ENCODE measurements at regions of chr12 and their contacts with region 1.

Region 1: GRCh38 chr12:93689076-93689834 is 12.1 kb downstream of the CRADD start:
- DNase-seq: no peak
- ATAC-seq: no peak
- H3K4me3 ChIP-seq: no peak overlapping the region
- H3K27ac ChIP-seq: no peak overlapping the region
- H3K4me1 ChIP-seq: no peaks in the 10 kb centered on the region
- H3K27me3 ChIP-seq: no peaks in the 10 kb centered on the region
- CTCF ChIP-seq: no peak

Region 2: GRCh38 chr12:93127582-93128331 is 561.5 kb before region 1 on chr12:
- intact Hi-C with region 1: no loop called
- DNase-seq: peak in 4 of 6 donors; percentile 26 to 70 (median 54)
- ATAC-seq: peak; percentile 64 to 87 (median 76)
- H3K4me3 ChIP-seq: no peak overlapping the region
- H3K27ac ChIP-seq: peak overlapping the region; percentile 37 to 61 (median 52)
- H3K4me1 ChIP-seq: peaks cover 0 to under 1% (median 0%) of the 10 kb centered on the region in 3 donors
- H3K27me3 ChIP-seq: no peaks in the 10 kb centered on the region
- CTCF ChIP-seq: peak in 1 of 4 donors; percentile 15

Region 3: GRCh38 chr12:93727195-93727811 is 38.0 kb after region 1 on chr12:
- intact Hi-C with region 1: loop called in 1 of 3 experiments (anchors 5 kb)
- DNase-seq: no peak
- ATAC-seq: peak; percentile 61 to 75 (median 72)
- H3K4me3 ChIP-seq: no peak overlapping the region
- H3K27ac ChIP-seq: no peak overlapping the region
- H3K4me1 ChIP-seq: peaks cover 0 to 5% (median 0%) of the 10 kb centered on the region in 3 donors
- H3K27me3 ChIP-seq: no peaks in the 10 kb centered on the region
- CTCF ChIP-seq: no peak